GM12878 (cell line): ENCODE measurements at regions of chr2 and their contacts with region 1.

Region 1: DNA sequence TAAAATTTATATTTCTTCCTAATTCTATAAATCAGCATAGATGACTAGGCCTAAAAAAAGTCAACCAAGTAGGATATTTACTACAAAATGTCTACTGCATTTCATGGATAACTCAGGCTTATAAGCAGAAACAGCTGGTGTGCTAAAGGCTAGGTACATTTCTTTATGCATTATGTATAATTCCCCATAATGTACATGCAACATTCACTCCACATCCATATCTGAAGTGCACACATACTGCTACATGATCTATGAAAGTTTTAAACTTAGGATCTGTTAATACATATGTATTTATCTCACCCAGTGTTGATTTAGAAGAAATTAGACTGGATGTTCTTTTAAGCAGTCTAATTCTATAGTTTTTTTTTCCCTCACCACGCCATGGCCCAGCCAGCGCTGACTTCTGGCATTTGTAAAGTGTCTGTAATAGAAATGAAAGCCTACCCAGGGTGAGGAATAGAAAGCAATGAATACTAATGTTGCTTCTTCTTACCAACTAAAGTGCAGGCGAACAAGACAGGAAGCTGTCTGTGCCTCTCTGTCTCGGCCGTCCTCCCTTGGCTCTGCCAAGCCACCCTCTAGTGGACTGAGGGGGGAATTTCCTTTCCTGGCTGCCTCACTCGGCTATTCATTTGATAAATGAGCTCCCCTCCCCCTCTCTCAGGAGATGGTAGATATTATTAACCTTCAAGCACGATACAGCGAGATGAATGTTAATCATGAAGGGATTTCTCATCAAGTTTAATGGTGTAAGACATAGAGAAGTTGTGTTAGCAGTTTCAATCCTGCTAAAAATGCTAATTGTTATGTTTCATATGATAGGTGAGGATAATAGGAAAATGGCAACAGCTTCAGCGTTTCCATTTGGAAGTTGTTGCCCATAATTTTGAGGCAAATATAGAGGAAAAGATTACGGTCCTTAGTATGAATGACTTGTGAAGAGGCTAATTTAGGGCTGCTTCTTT is 384.5 kb downstream of the MTX2 start:
- DNase-seq: no peak
- ATAC-seq: peak; percentile 97
- H3K4me3 ChIP-seq: no peak overlapping the region
- H3K27ac ChIP-seq: no peak overlapping the region
- H3K4me1 ChIP-seq: no peaks in the 10 kb centered on the region
- H3K27me3 ChIP-seq: no peaks in the 10 kb centered on the region; a peak in 1 of 4 replicates
- CTCF ChIP-seq: peak; percentile 60 to 76 (median 62)
- EP300 ChIP-seq: no peak
- POLR2A ChIP-seq: no peak
- RAD21 ChIP-seq: peak; percentile 43

Region 2: GRCh38 chr2:176140513-176141317 is 513.0 kb before region 1 on chr2:
- CTCF ChIA-PET with region 1: interaction called, 77 read pairs
- POLR2A ChIA-PET with region 1: interaction called, 4 read pairs
- RAD21 ChIA-PET with region 1: interaction called, 15 read pairs
- SMC1A ChIA-PET with region 1: interaction called, 21 read pairs
- in situ Hi-C with region 1: no loop called
- intact Hi-C with region 1: loop called (anchors 1 kb)
- DNase-seq: peak; percentile 24
- ATAC-seq: peak; percentile 99
- H3K4me3 ChIP-seq: peak overlapping the region; percentile 37; the same call in 1 of the 2 replicates
- H3K27ac ChIP-seq: no peak overlapping the region
- H3K4me1 ChIP-seq: no peaks in the 10 kb centered on the region
- H3K27me3 ChIP-seq: peaks cover 0 to 11% of the 10 kb centered on the region in 2 experiments
- CTCF ChIP-seq: peak; percentile 75 to 93 (median 92)
- EP300 ChIP-seq: no peak
- POLR2A ChIP-seq: no peak; the same call in 1 of the 2 replicates
- RAD21 ChIP-seq: peak; percentile 95

Region 3: DNA sequence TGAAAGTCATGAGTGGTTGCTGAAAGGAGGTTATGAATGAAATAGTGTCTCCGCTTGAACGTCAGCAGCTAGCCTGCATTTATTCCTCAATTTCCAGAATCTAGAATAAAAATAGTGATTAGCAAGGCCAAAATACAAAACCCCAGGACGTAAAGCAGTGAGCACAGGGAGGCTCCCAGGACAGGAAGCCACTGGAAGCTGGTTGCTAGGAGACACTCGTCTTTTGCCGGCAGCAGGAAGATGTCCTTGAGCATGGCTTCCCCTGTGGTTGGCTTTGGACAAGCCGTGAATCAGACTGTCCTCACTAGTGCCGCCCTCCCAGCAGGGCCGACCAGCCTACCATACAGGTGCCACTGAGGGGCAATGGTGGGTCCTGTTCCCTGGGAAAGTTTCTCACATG is 10.1 kb before region 1 on chr2:
- CTCF ChIA-PET with region 1: interaction called, 83 read pairs
- POLR2A ChIA-PET with region 1: interaction called, 3 read pairs
- RAD21 ChIA-PET with region 1: interaction called, 20 read pairs
- SMC1A ChIA-PET with region 1: interaction called, 79 read pairs
- in situ Hi-C with region 1: no loop called
- intact Hi-C with region 1: no loop called
- DNase-seq: no peak
- ATAC-seq: no peak
- H3K4me3 ChIP-seq: no peak overlapping the region
- H3K27ac ChIP-seq: no peak overlapping the region
- H3K4me1 ChIP-seq: no peaks in the 10 kb centered on the region
- H3K27me3 ChIP-seq: peaks cover 3 to 4% of the 10 kb centered on the region in 2 experiments; a peak in 3 of 4 replicates
- CTCF ChIP-seq: no peak
- EP300 ChIP-seq: no peak
- POLR2A ChIP-seq: no peak
- RAD21 ChIP-seq: no peak

Region 4: DNA sequence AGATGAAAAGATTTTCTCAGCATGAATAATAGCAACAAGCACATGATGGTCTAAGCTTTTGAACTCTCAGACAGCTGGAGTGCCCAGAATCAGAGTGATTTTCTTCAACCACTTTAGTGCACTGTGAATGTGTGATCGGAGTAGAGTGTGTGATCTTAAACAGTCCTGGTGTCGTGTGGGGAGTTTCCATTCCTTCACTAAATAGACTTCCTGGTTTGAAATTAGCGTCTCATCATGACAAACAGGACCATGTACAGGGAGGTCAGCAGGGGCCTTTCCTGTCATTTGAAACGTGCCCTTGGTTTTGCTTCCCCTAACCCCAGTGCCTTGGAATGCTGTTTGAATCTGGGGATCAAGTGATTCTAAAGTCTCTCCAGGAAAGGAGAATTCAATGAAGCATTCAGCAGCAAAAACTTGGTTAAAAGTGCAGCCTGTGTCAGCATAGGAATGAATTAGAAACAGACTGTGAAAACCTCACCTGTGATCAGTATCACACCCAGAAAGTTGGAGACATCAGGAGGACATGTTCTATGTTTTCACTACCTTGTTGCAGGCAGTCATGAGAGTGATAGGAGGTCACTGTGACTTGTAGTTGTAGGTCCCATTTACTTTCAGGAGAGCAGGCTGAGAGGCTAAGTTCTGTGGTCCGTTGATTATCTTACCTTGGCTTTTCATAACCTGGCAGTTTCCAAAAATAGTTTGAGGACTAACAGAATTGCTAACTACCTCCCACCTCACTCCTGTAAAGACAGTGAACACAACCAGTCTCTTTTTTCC is 15.8 kb after region 1 on chr2:
- CTCF ChIA-PET with region 1: interaction called, 56 read pairs
- POLR2A ChIA-PET with region 1: interaction called, 4 read pairs
- RAD21 ChIA-PET with region 1: interaction called, 43 read pairs
- SMC1A ChIA-PET with region 1: interaction called, 88 read pairs
- in situ Hi-C with region 1: no loop called
- intact Hi-C with region 1: no loop called
- DNase-seq: peak; percentile 37
- ATAC-seq: peak; percentile 86
- H3K4me3 ChIP-seq: no peak overlapping the region
- H3K27ac ChIP-seq: peak overlapping the region; percentile 48; the same call in 1 of the 2 replicates
- H3K4me1 ChIP-seq: peaks cover 4% of the 10 kb centered on the region
- H3K27me3 ChIP-seq: no peaks in the 10 kb centered on the region
- CTCF ChIP-seq: no peak
- EP300 ChIP-seq: 0 out of 4 replicates have a peak, but pooled peaks of 1 of the 2 experiments have one; percentile 22
- POLR2A ChIP-seq: no peak
- RAD21 ChIP-seq: no peak

Region 5: GRCh38 chr2:176682278-176682677 is 28.5 kb after region 1 on chr2:
- CTCF ChIA-PET with region 1: interaction called, 10 read pairs
- POLR2A ChIA-PET with region 1: no interaction called
- RAD21 ChIA-PET with region 1: interaction called, 4 read pairs
- SMC1A ChIA-PET with region 1: interaction called, 6 read pairs
- in situ Hi-C with region 1: no loop called
- intact Hi-C with region 1: no loop called
- DNase-seq: no peak
- ATAC-seq: no peak
- H3K4me3 ChIP-seq: no peak overlapping the region
- H3K27ac ChIP-seq: no peak overlapping the region
- H3K4me1 ChIP-seq: no peaks in the 10 kb centered on the region
- H3K27me3 ChIP-seq: no peaks in the 10 kb centered on the region
- CTCF ChIP-seq: no peak
- EP300 ChIP-seq: no peak
- POLR2A ChIP-seq: no peak
- RAD21 ChIP-seq: no peak

Region 6: DNA sequence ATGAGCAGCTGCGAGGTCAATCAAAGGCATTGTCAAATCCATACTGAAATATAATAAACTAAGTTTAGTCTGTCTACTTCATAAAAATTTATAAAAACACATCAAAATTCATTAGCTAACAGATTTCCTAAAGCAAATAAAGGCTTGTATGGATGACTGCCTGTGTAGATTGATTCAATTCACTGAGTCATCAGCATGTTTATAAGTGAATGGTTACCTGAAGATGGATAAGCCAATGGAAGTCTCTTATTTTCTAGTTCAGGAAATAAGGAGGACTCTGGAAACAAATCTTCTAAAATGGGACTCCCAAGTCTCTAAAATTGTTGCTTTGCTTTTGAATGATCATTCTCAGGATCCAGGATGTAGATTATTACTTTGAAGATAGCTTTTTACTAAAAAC is 501.9 kb after region 1 on chr2:
- CTCF ChIA-PET with region 1: interaction called, 127 read pairs
- POLR2A ChIA-PET with region 1: no interaction called
- RAD21 ChIA-PET with region 1: interaction called, 21 read pairs
- SMC1A ChIA-PET with region 1: interaction called, 85 read pairs
- in situ Hi-C with region 1: no loop called
- intact Hi-C with region 1: no loop called
- DNase-seq: no peak
- ATAC-seq: no peak
- H3K4me3 ChIP-seq: no peak overlapping the region
- H3K27ac ChIP-seq: no peak overlapping the region
- H3K4me1 ChIP-seq: no peaks in the 10 kb centered on the region
- H3K27me3 ChIP-seq: no peaks in the 10 kb centered on the region
- CTCF ChIP-seq: no peak
- EP300 ChIP-seq: no peak
- POLR2A ChIP-seq: no peak
- RAD21 ChIP-seq: no peak